ENCODE measurements at regions of chr2 and their contacts with region 1.

Region 1: GRCh38 chr2:70161069-70161534 is 29.7 kb downstream of the C2orf42 start:
- DNase-seq: peak; percentile 24
- ATAC-seq: peak; percentile 78
- H3K4me3 Mint-ChIP-seq: no peak overlapping the region
- H3K27ac Mint-ChIP-seq: peak overlapping the region; percentile 20
- H3K4me1 Mint-ChIP-seq: peaks cover 7% of the 10 kb centered on the region
- H3K27me3 Mint-ChIP-seq: no peaks in the 10 kb centered on the region

Region 2: GRCh38 chr2:70226781-70227180 is 65.7 kb after region 1 on chr2:
- CTCF ChIA-PET with region 1: no interaction called
- POLR2A ChIA-PET with region 1: no interaction called
- intact Hi-C with region 1: loop called in 1 of 2 experiments (anchors 5 kb)
- DNase-seq: no peak
- ATAC-seq: no peak
- H3K4me3 Mint-ChIP-seq: no peak overlapping the region
- H3K27ac Mint-ChIP-seq: peak overlapping the region; percentile 42
- H3K4me1 Mint-ChIP-seq: peaks cover 12% of the 10 kb centered on the region
- H3K27me3 Mint-ChIP-seq: no peaks in the 10 kb centered on the region

Measured in activated CD4-positive, alpha-beta T cell treated with anti-CD3 and anti-CD28 coated beads for 36 hours (primary cell).